GM23248 (cell line): ENCODE measurements at regions of chr5 and their contacts with region 1.

Region 1: DNA sequence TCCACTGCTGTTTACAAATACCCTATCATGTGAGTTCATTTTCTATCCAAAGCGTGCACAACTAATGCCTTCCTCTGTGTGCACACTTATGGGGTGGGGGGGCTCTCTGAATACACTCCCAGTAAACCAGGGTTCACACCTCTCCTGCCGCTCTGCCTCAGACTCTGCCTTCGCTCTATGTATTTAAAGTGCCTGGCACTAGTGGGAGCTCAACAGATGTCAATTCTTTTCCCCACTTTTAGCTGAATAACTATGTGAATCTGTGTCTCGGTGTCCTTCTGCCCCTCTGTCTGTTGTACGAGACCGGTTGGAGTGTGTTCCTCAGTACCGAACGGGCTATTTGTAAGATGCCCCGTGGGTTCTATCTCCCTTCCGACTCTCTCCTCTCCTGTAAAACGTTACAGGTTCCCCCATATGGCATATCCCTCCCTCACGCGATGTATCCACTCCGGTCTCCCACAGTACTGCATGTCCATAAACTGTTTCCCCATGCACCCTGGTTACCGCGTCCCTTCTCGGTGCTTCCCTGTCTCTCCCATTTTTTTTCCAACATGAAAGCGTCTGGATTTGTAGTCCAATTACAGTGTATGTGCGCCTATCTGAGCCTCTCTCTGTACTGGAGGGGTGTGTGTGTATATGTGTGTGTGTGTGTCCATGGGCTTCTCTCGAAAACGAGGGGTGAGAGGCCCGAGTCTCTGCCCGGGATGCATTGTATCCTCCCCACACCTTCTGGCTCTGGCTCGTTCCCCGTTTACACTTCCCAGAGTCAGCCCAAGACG is 1.6 kb downstream of the ELL2 start:
- DNase-seq: peak; percentile 59
- H3K4me3 ChIP-seq: peak overlapping the region; percentile 97
- H3K27ac ChIP-seq: peak overlapping the region; percentile 90
- H3K4me1 ChIP-seq: peaks cover 27% of the 10 kb centered on the region
- H3K27me3 ChIP-seq: no peaks in the 10 kb centered on the region

Region 2: GRCh38 chr5:96336351-96336985 is 376.4 kb after region 1 on chr5:
- in situ Hi-C with region 1: loop called (anchors 10 kb)
- DNase-seq: peak; percentile 89
- H3K4me3 ChIP-seq: no peak overlapping the region
- H3K27ac ChIP-seq: peak overlapping the region; percentile 73
- H3K4me1 ChIP-seq: peaks cover 63% of the 10 kb centered on the region
- H3K27me3 ChIP-seq: no peaks in the 10 kb centered on the region